OCI-LY7 (cell line): ENCODE measurements at regions of chr19 and their contacts with region 1.

Region 1: GRCh38 chr19:13597640-13598039 is 91.4 kb upstream of the CACNA1A start:
- DNase-seq: peak; percentile 74
- H3K4me3 ChIP-seq: no peak overlapping the region
- H3K27ac ChIP-seq: no peak overlapping the region
- H3K4me1 ChIP-seq: no peaks in the 10 kb centered on the region
- CTCF ChIP-seq: peak; percentile 82

Region 2: DNA sequence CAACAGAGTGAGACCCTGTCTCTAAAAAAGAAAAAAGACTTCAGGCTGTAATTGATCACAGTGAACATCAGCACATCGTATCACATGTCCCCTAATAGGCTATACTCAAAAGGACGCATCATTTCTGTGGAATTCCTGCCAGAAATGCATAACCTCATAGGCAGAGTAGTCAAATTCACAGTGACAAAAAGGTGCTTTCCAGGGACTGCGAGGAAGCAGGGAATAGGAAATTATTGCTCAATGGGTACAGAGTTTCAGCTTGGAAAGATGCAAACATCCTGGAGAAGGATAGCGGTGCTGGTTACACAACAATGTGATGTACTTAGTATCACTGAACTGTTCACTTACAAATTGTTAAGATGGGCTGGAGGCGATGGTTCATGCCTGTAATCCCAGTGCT is 125.6 kb after region 1 on chr19:
- CTCF ChIA-PET with region 1: no interaction called
- POLR2A ChIA-PET with region 1: no interaction called
- intact Hi-C with region 1: loop called (anchors 5 kb)
- DNase-seq: no peak
- H3K4me3 ChIP-seq: no peak overlapping the region
- H3K27ac ChIP-seq: no peak overlapping the region
- H3K4me1 ChIP-seq: no peaks in the 10 kb centered on the region
- CTCF ChIP-seq: no peak

Region 3: DNA sequence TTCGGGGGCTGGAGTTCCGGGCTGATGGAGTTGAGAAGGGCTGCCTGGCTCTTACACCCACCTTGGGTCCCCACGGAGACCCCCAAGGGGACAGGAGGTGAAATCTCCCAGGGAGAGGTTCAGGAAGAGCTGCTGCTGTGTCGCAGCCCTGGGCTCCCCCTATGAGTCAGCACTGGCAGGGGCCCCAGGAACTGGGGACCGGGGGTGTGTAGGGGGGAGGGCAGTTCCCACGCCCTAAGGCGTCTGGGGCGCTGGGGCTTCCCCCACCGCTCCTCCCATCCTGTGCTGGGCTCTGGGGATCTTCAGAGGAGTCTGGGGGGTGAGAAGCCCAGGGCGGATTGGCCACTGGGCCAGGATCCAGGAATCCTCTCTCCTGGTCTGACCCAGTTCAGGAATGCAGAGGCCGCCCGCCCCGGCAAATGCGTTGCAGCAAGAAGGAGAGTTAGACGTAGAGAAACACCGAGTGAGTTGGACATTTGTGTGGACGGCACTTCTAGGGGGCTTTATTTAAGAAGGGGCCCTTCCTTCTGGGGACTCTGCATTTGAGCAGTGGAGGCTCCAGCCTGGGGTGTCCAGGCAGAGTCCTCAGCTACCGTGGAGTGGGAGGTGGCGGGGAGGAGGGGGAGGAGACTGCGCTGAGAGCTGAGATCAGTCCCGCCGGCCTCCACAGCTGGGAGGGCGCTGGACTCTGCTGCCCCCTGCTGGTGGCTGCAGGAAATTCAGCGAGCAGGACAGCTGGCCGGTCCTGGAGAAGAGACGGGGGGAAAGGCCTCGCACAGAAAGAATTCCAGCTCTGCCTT is 264.3 kb after region 1 on chr19:
- CTCF ChIA-PET with region 1: interaction called, 3 read pairs
- POLR2A ChIA-PET with region 1: no interaction called
- intact Hi-C with region 1: loop called (anchors 1 kb)
- DNase-seq: peak; percentile 76
- H3K4me3 ChIP-seq: peak overlapping the region; percentile 56
- H3K27ac ChIP-seq: no peak overlapping the region
- H3K4me1 ChIP-seq: peaks cover 13% of the 10 kb centered on the region
- CTCF ChIP-seq: peak; percentile 86

Region 4: GRCh38 chr19:14073261-14073924 is 475.8 kb after region 1 on chr19:
- CTCF ChIA-PET with region 1: no interaction called
- POLR2A ChIA-PET with region 1: no interaction called
- intact Hi-C with region 1: loop called (anchors 10 kb)
- DNase-seq: peak; percentile 88
- H3K4me3 ChIP-seq: peak overlapping the region; percentile 76
- H3K27ac ChIP-seq: peak overlapping the region; percentile 62
- H3K4me1 ChIP-seq: peaks cover 29% of the 10 kb centered on the region
- CTCF ChIP-seq: no peak; the same call in 1 of the 2 replicates